ENCODE measurements at regions of chr2 and their contacts with region 1.

Region 1: GRCh38 chr2:63841254-63842022 is at the start of gene UGP2:
- DNase-seq: peak; percentile 94
- ATAC-seq: peak; percentile 77
- H3K4me3 Mint-ChIP-seq: peak within 1 kb of the TSS; percentile 86
- H3K27ac Mint-ChIP-seq: peak within 1 kb of the TSS; percentile 100
- H3K4me1 Mint-ChIP-seq: peaks cover 45% of the 10 kb centered on the region
- H3K27me3 Mint-ChIP-seq: no peaks in the 10 kb centered on the region
- CTCF ChIP-seq: peak; percentile 9
- total RNA-seq, gene UGP2: 81.4 to 83.7 TPM

Region 2: DNA sequence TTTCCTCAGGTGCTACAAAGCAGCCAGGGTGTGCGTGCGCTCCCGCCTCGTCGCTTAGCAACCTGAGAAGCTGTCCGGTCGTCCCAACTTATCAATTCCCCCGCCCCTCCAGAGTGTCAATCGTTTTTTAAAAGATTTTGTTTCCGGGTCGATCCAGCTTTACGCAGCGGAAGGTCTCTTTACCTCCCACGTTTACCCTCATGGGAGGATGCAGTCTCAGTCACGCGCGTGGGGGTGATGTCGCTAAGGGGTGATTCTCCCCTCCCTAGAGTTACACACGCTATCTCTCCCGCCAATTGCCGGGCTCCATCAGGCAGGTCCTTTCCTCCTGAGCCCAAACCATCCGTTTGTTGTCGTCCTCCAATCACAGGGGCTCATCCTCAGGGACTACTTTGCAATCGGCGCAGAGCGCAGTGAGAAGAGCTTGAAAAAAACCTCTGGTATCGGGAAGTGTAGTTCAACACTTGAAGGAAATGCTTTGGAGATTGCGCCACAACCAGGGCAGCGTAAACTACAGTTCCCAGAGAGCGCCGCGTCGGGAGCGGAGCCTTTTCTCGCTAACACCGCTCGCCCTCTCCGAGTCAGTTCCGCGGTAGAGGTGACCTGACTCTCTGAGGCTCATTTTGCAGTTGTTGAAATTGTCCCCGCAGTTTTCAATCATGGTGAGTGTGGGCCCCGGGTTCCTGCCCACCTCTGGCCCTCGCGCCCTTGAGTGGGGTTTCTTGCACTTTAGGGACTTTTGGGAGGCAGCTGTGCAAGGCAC is 252.9 kb before region 1 on chr2 and contains the starts of genes MDH1 and WDPCP:
- CTCF ChIA-PET with region 1: no interaction called
- POLR2A ChIA-PET with region 1: interaction called, 15 read pairs
- intact Hi-C with region 1: loop called (anchors 10 kb)
- DNase-seq: peak; percentile 97
- ATAC-seq: peak; percentile 92
- H3K4me3 Mint-ChIP-seq: peak within 1 kb of the TSS; percentile 89
- H3K27ac Mint-ChIP-seq: peak within 1 kb of the TSS; percentile 96
- H3K4me1 Mint-ChIP-seq: peaks cover 36% of the 10 kb centered on the region
- H3K27me3 Mint-ChIP-seq: no peaks in the 10 kb centered on the region
- CTCF ChIP-seq: no peak
- total RNA-seq, gene MDH1: 241 to 246 TPM
- total RNA-seq, gene WDPCP: 5.0 to 5.8 TPM

Region 3: DNA sequence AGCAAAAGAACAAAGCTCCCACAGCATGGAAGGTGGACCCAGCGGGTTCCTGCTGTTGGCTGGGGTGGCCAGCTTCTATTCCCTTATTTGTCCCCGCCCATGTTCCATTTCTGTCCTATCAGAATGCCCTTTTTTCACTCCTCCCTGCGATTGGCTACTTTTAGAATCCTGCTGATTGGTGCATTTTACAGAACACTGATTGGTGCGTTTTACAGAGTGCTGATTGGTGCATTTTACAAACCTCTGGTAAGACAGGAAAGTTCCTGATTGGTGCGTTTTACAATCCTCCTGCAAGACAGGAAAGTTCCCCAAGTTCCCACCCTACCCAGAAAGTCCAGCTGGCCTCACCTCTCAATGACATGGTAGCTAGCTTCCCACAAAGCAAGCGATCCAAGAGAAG is 40.0 kb before region 1 on chr2:
- CTCF ChIA-PET with region 1: no interaction called
- POLR2A ChIA-PET with region 1: no interaction called
- intact Hi-C with region 1: no loop called
- DNase-seq: no peak
- ATAC-seq: no peak
- H3K4me3 Mint-ChIP-seq: no peak overlapping the region
- H3K27ac Mint-ChIP-seq: no peak overlapping the region
- H3K4me1 Mint-ChIP-seq: no peaks in the 10 kb centered on the region
- H3K27me3 Mint-ChIP-seq: no peaks in the 10 kb centered on the region
- CTCF ChIP-seq: no peak

Measured in activated CD8-positive, alpha-beta T cell treated with anti-CD3 and anti-CD28 coated beads for 36 hours (primary cell).